Head of caudate nucleus (tissue), 42 donors: ENCODE measurements at regions of chr11 and their contacts with region 1.

Region 1: DNA sequence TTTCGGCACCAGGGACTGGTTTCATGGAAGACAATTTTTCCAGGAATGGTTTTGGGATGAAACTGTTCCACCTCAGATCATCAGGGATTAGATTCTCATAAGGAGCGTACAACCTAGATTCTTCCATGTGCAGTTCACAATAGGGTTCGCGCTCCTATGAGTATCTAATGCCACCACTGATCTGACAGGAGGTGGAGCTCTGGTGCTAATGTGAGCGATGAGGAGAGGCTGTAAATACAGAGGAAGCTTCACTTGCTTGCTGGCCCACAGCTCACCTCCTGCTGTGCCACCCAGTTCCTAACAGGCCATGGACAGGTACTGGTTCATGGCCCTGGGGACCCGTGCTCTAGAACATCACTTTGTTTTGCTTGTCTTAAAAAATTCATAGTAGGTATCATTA is 41.8 kb upstream of the AMPD3 start:
- DNase-seq: peak in 40 of 42 donors; percentile 34 to 87 (median 64)

Region 2: DNA sequence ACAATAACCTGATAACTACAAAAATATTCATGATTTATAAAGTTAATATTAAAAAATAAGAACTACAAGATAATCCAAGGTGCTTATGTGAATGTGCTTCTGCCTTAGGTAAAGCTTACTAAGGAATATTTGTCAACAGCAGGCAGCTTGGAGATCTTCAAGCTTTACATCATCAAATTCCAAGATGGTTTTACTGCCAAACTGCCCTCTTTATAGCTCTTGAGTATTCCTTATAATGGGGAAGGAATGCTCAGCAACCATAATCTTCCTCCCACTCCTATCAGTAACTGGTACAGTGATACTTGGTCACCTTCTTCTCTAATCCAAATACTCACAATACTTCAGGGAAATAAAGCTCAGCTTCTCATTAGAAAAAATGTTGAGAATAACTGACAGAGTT is 149.3 kb before region 1 on chr11:
- intact Hi-C with region 1: no loop called
- DNase-seq: no peak

Region 3: DNA sequence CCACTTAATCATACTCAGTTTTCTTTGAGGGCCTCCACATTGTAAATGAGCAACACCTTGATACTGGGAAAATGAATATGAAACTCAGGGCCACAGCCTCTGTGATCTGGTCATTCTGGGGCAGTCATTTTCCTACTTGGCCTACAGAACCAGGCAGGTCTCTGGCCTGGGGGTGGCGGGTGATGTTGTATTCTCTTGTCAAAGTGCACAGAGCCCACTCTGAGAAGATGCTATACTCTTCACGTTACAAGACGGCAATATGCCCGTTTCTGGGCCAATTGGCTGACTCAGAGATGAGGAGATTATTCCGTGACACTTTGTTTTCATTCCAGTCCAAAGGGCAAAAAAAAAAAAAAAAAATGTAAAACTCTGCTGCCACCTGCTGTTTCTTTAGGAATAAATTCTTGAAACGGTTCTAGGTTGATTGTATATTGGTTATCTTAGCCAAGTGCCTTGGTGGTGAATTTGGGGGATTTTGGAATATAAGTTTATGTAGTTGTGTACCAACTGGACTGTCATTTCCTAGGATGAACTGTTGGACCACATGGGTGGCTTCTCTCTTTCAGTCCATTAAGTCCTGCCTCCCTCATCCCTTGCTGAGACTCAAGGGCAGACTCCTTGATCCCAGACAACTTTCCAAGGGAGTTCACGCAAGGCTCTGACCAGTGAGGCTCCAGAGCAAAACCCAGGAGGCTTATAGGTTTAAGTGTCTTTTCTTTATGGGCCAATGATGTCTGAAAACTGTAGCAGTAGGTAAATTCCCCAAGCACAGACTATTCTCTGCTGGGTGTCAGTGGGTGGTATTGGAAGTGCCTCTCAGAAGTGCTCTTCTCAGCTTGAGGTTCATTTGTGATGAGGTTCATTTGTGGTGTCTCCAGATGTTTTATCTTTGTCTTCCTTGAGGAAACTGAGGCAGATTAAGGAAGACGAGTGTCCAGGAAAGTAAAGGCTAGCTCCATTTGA is 90.2 kb before region 1 on chr11:
- intact Hi-C with region 1: no loop called
- DNase-seq: peak in 8 of 42 donors; percentile 10 to 68 (median 28)

Region 4: DNA sequence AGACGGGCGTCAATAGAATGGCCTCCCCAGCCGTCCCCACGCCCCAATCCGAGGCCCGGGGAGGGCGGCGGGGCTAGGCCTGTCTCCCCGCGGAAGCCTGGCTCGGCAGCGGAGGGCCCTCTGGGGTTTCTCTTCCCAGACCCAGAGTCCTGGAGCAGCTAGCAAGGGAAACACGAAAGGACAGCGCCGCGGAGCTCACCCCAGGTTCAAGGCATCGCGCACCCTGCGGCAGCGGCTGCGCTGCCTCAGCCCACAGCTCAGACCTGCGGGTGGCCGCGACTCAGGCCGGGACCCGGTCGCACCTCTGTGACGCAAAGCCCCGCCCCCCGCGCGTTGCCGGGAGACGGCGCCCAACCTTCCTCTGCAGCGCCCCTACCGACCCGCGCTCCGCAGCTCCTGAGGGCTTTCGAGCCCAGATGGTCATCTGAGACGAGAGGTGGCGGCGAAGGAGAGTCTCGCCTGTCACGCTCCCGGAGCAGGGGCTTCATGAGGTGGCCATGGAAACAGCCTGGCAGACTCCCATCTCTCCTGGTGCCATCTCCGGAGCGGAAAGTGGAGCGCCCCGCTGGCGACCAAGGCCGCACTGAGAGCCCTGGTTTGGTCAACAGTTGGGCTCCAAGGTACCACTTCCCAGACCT is 127.8 kb after region 1 on chr11 and contains the start of gene RNF141:
- intact Hi-C with region 1: loop called (anchors 5 kb)
- DNase-seq: peak; percentile 90 to 99 (median 97)

Region 5: GRCh38 chr11:10653926-10654810 is 240.9 kb after region 1 on chr11:
- intact Hi-C with region 1: loop called (anchors 5 kb)
- DNase-seq: peak in 22 of 42 donors; percentile 14 to 77 (median 55)